ENCODE measurements at regions of chr17 and their contacts with region 1.

Region 1: GRCh38 chr17:74961657-74962490 is 10.7 kb downstream of the HID1 start:
- DNase-seq: peak; percentile 70
- H3K4me3 Mint-ChIP-seq: no peak overlapping the region
- H3K27ac Mint-ChIP-seq: no peak overlapping the region
- H3K4me1 Mint-ChIP-seq: no peaks in the 10 kb centered on the region
- H3K27me3 Mint-ChIP-seq: peaks cover 6% of the 10 kb centered on the region

Region 2: GRCh38 chr17:74601944-74602572 is 359.8 kb before region 1 on chr17:
- intact Hi-C with region 1: no loop called
- DNase-seq: no peak
- H3K4me3 Mint-ChIP-seq: no peak overlapping the region
- H3K27ac Mint-ChIP-seq: no peak overlapping the region
- H3K4me1 Mint-ChIP-seq: peaks cover 25% of the 10 kb centered on the region
- H3K27me3 Mint-ChIP-seq: peaks cover 21% of the 10 kb centered on the region

Region 3: DNA sequence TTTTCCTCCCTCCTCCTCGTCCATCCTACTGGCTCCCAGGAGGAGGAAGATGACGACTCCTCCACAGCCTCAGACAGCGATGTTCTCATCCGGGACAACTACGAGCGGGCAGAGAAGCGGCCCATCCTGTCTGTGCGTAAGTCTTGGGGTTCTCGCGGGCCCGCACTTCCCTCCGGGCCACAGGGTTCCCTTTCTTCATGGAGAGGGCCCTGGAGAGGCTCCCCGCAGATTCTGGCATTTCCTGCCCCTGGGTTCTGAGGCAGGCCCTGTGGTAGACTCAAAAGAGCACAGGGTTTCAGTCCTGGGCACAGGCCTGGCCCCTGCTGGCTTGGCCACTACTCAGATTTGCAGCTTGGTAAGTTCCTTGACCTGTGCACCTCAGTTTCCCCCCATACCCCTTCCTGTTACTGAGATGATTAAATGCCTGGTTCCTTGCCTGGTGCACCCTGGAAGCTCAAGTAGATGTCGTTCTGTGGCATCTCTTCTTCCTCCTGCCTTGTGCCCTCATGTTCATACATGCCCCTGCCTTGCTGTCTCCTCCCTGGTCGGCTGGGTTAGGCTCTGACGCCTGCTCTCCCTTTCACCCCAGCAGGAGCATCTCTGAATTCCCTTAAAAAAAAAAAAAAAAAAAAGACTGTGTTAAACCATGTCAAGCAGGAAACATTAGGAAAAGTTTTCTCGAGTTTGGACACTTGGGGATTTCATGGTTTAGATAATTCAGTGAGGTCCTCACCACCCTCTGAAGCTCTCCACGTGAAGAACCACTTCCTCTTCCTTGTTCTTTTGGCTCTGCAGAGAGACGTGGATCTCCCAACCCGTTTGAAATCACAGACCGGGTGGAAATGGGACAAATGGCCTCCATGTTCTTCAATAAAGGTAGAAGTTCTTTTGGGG is 171.5 kb before region 1 on chr17:
- intact Hi-C with region 1: loop called (anchors 2 kb)
- DNase-seq: no peak
- H3K4me3 Mint-ChIP-seq: no peak overlapping the region
- H3K27ac Mint-ChIP-seq: peak overlapping the region; percentile 47
- H3K4me1 Mint-ChIP-seq: peaks cover 39% of the 10 kb centered on the region
- H3K27me3 Mint-ChIP-seq: no peaks in the 10 kb centered on the region

Region 4: DNA sequence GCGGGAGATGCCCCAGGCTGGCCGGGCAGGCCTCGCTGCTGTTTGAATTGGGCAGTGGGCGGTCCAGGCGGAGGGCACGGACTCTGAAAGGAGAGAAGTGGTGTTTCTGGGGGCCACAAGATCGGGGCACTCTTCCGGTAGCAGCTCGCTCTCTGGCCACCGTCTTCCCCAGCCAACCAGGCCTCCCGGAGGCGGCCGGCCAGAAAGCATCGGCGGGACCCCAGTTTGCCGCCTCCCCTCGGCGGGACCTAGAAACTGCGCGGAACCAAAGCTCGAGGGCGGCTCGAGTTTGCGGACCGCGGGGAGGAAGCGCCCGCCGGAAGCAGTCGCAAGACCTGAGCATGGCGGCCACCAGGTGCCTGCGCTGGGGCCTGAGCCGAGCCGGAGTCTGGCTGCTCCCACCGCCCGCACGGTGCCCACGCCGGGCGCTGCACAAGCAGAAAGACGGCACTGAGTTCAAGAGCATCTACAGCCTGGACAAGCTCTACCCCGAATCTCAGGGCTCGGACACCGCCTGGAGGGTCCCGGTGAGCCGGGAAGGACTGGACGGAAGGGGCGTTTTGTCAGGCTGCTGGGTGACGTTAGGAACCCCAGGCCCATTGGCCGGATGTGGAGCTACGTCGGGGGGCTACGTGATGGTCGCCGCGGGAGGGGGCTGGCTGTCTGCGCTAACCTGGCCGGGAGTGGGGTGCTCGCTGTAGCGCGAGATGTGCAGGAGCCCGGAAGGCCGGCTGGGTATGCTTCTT is 50.6 kb after region 1 on chr17 and contains the start of gene MRPL58:
- intact Hi-C with region 1: loop called (anchors 1 kb)
- DNase-seq: peak; percentile 75
- H3K4me3 Mint-ChIP-seq: peak within 1 kb of the TSS; percentile 95
- H3K27ac Mint-ChIP-seq: peak within 1 kb of the TSS; percentile 88
- H3K4me1 Mint-ChIP-seq: peaks cover 17% of the 10 kb centered on the region
- H3K27me3 Mint-ChIP-seq: no peaks in the 10 kb centered on the region
- total RNA-seq, gene MRPL58: 77.8 and 78.1 TPM in 2 replicates

Region 5: DNA sequence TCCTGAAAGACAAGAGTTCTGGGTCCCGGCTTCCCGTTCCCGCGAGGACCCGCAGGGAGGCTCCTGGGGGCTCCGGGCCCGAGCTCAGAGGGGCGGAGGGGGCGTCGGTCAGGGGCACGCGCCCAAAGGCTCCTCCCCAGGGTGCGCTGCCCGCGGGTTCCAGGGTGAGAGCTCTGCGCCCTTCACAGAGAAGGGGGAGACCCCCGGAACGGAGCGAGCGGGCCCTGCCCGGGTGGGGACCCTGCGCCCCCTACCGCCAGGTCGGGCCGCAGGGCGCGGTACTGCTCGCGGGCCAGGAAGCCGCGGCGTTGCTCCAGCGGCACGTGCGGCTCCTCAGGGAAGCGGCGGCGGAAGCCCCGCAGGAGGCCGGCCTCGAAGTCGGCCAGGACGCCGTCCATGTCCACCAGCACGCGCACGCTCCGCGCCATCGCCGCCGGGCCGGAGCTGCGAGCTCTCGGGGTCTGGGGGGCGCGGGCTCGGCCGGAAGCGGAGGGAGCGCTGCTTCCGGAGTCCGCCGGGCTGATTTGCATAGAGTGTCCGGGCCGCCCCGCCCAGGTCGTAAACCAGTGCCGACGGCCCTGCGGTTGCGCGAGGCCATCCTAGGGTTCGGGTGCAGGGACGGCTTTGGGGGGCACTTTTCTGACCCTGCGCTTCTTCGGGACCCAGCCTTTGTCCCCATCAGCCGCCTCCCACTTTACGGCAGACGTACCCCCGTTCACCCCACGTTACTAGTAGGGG is 169.6 kb after region 1 on chr17 and contains the start of gene NT5C:
- intact Hi-C with region 1: loop called (anchors 1 kb)
- DNase-seq: peak; percentile 70
- H3K4me3 Mint-ChIP-seq: peak within 1 kb of the TSS; percentile 92
- H3K27ac Mint-ChIP-seq: peak within 1 kb of the TSS; percentile 88
- H3K4me1 Mint-ChIP-seq: peaks cover 12% of the 10 kb centered on the region
- H3K27me3 Mint-ChIP-seq: no peaks in the 10 kb centered on the region
- total RNA-seq, gene NT5C: 80.0 and 80.1 TPM in 2 replicates

Region 6: DNA sequence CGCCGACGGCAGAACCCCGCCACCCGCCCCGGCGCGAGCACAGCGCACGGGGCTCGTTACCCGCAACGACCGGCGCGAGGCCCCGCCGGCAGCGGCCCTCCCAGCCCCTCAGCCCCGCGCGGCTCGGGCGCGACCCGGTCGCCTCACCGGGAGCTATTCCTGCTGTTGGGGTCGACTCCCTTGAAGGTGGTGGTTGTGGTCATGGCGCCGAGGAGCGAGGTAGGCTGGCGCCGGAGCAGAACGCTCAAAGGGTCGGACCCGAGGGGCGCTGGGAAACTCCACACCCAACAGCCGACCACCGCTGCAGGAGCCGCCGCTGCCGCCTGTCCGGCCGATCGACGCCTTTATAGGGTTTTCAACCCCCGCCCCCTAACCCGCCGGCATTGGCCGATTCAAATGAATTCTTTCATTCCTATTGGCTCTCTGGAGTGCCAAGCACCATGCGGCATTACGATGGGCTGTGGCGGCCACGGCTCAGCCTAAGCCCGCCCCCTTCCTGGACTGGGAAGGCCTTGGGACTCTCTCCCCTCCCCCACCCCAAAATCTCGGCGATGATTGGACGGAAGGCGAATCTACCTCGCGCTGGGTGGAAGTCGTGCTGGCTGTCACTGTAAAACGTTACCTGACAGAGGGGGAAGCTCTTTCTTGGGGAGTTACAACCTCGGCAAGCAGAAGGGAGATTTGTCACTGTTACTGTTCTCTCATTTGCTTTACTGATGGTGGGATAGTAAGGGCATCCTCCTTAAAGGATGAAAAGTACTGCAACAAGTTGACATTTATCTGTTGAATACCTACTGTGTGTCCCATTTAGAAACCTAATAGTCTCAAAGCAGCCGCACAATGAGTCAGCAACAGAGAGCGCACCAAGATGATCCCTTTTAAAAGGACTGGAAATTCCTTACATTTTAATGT is 192.6 kb after region 1 on chr17 and contains the start of gene JPT1:
- intact Hi-C with region 1: no loop called
- DNase-seq: peak; percentile 97
- H3K4me3 Mint-ChIP-seq: peak within 1 kb of the TSS; percentile 97
- H3K27ac Mint-ChIP-seq: peak within 1 kb of the TSS; percentile 93
- H3K4me1 Mint-ChIP-seq: peaks cover 34% of the 10 kb centered on the region
- H3K27me3 Mint-ChIP-seq: no peaks in the 10 kb centered on the region
- total RNA-seq, gene JPT1: 271 and 299 TPM in 2 replicates

Measured in activated T-helper 1 cell treated with anti-CD3 and anti-CD28 coated beads, Interleukin-12 subunit alpha, Interleukin-12 subunit beta, Interleukin-2, Interleukin-4 antibody, amounts not matched to agents 30 ng/mL and 10 ng/mL and 1 ng/mL, durations not matched to agents 14 hours and 24 hours and 36 hours (primary cell).